ENCODE measurements at regions of chr9 and their contacts with region 1.

Region 1: GRCh38 chr9:111037381-111038305 is 627 bp downstream of the LPAR1 start:
- DNase-seq: no peak
- ATAC-seq: peak; percentile 62
- H3K4me3 ChIP-seq: peak overlapping the region; percentile 53; the same call in 1 of the 2 replicates
- H3K27ac ChIP-seq: no peak overlapping the region
- H3K4me1 ChIP-seq: no peaks in the 10 kb centered on the region
- H3K27me3 ChIP-seq: peaks cover 0 to 10% of the 10 kb centered on the region in 2 experiments; a peak in 1 of 4 replicates
- CTCF ChIP-seq: peak in 2 of 3 experiments; percentile 40 to 54; a peak in 3 of 6 replicates
- EP300 ChIP-seq: no peak
- POLR2A ChIP-seq: no peak
- RAD21 ChIP-seq: peak; percentile 65

Region 2: GRCh38 chr9:110874963-110875674 is 162.5 kb before region 1 on chr9:
- CTCF ChIA-PET with region 1: interaction called, 5 read pairs
- POLR2A ChIA-PET with region 1: no interaction called
- RAD21 ChIA-PET with region 1: interaction called, 7 read pairs
- SMC1A ChIA-PET with region 1: interaction called, 19 read pairs
- in situ Hi-C with region 1: no loop called
- intact Hi-C with region 1: loop called (anchors 5 kb)
- DNase-seq: peak; percentile 48
- ATAC-seq: peak; percentile 95
- H3K4me3 ChIP-seq: no peak overlapping the region
- H3K27ac ChIP-seq: no peak overlapping the region
- H3K4me1 ChIP-seq: peaks cover 4% of the 10 kb centered on the region; the same call in 1 of the 2 replicates
- H3K27me3 ChIP-seq: no peaks in the 10 kb centered on the region
- CTCF ChIP-seq: peak; percentile 39 to 59 (median 40); a peak in 5 of 6 replicates
- EP300 ChIP-seq: 0 out of 4 replicates have a peak, but pooled peaks of 1 of the 2 experiments have one; percentile 48
- POLR2A ChIP-seq: no peak
- RAD21 ChIP-seq: peak; percentile 79

Region 3: GRCh38 chr9:110977259-110977709 is 60.4 kb before region 1 on chr9:
- CTCF ChIA-PET with region 1: interaction called, 4 read pairs
- POLR2A ChIA-PET with region 1: interaction called, 3 read pairs
- RAD21 ChIA-PET with region 1: interaction called, 9 read pairs
- SMC1A ChIA-PET with region 1: interaction called, 12 read pairs
- in situ Hi-C with region 1: no loop called
- intact Hi-C with region 1: no loop called
- DNase-seq: no peak
- ATAC-seq: peak; percentile 29
- H3K4me3 ChIP-seq: no peak overlapping the region
- H3K27ac ChIP-seq: no peak overlapping the region
- H3K4me1 ChIP-seq: no peaks in the 10 kb centered on the region
- H3K27me3 ChIP-seq: no peaks in the 10 kb centered on the region
- CTCF ChIP-seq: no peak
- EP300 ChIP-seq: no peak
- POLR2A ChIP-seq: no peak
- RAD21 ChIP-seq: no peak

Region 4: DNA sequence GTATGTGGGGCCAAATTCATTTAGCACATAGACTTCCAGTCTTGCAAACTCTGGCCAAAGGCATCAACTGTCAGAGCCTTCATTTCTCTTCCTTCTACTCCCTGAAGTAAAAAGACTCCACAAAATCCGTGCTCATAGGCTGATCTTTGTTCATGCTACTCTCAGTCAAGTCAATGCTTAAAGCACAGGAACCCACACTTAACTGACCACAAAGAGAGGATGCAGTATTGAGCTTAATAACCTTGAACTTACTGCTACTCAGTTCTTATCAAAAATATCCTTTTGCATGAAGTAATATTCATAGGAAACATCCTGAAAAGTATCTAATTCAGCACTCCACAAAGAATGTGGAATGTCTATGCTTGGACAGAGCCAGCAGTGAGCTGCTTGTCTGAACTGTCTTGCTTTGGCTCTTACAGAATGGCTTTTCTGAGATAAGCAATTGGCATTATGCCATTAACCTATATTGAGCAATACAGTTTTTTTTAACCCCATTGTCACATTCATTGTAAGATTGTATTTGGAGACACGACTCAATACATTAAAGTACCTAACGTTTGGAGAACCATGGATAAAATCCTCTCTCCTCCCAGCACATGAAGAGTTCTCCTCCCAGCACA is 21.1 kb before region 1 on chr9:
- CTCF ChIA-PET with region 1: interaction called, 28 read pairs
- POLR2A ChIA-PET with region 1: interaction called, 4 read pairs
- RAD21 ChIA-PET with region 1: interaction called, 22 read pairs
- SMC1A ChIA-PET with region 1: interaction called, 218 read pairs
- in situ Hi-C with region 1: no loop called
- intact Hi-C with region 1: no loop called
- DNase-seq: no peak
- ATAC-seq: peak; percentile 64
- H3K4me3 ChIP-seq: no peak overlapping the region
- H3K27ac ChIP-seq: no peak overlapping the region
- H3K4me1 ChIP-seq: no peaks in the 10 kb centered on the region
- H3K27me3 ChIP-seq: no peaks in the 10 kb centered on the region
- CTCF ChIP-seq: no peak
- EP300 ChIP-seq: no peak
- POLR2A ChIP-seq: no peak
- RAD21 ChIP-seq: no peak

Region 5: GRCh38 chr9:111078391-111079038 is 40.9 kb after region 1 on chr9:
- CTCF ChIA-PET with region 1: interaction called, 4 read pairs
- POLR2A ChIA-PET with region 1: interaction called, 4 read pairs
- RAD21 ChIA-PET with region 1: interaction called, 36 read pairs
- SMC1A ChIA-PET with region 1: interaction called, 18 read pairs
- in situ Hi-C with region 1: no loop called
- intact Hi-C with region 1: loop called (anchors 1 kb)
- DNase-seq: peak; percentile 60
- ATAC-seq: peak; percentile 83
- H3K4me3 ChIP-seq: no peak overlapping the region
- H3K27ac ChIP-seq: peak overlapping the region; percentile 50
- H3K4me1 ChIP-seq: no peaks in the 10 kb centered on the region
- H3K27me3 ChIP-seq: no peaks in the 10 kb centered on the region
- CTCF ChIP-seq: no peak
- EP300 ChIP-seq: peak; percentile 25 to 43; a peak in 2 of 4 replicates
- POLR2A ChIP-seq: no peak
- RAD21 ChIP-seq: no peak

Region 6: DNA sequence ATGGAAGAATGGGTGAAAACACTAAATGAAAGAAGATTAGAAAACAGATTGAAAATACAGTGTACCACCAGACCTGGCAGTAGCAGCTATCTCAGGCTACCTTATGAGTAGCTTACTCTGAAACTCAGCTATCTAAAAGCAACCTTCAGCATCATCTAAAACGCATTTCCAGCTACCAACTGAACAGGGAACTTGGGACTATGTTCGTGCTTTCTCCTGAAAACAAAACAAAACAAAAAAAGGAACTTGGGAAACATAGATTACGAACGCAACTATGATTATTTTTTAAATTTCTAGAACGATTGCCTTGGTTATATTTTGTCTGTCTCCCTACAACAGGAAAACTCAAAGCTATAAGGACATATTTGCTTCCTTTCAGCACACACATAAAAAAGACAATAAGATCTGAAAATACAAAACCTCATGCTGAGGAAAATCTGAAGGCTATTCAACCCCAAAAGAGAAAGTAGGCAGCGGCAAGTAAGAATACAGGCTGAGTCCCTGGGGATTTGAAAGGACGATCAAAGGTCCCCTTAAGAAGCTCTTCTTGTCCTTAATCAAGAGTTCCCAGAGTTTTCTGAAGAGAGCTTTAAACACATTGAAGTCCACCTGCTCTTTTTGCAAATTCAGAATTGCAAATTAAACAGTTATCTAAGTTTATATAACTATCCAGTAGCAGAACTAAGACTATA is 238.9 kb after region 1 on chr9:
- CTCF ChIA-PET with region 1: interaction called, 6 read pairs
- POLR2A ChIA-PET with region 1: interaction called, 6 read pairs
- RAD21 ChIA-PET with region 1: interaction called, 10 read pairs
- SMC1A ChIA-PET with region 1: interaction called, 6 read pairs
- in situ Hi-C with region 1: no loop called
- intact Hi-C with region 1: no loop called
- DNase-seq: no peak
- ATAC-seq: peak; percentile 67
- H3K4me3 ChIP-seq: no peak overlapping the region; the same call in 1 of the 2 replicates
- H3K27ac ChIP-seq: no peak overlapping the region
- H3K4me1 ChIP-seq: no peaks in the 10 kb centered on the region
- H3K27me3 ChIP-seq: no peaks in the 10 kb centered on the region
- CTCF ChIP-seq: no peak
- EP300 ChIP-seq: no peak
- POLR2A ChIP-seq: no peak
- RAD21 ChIP-seq: no peak

Measured in GM12878 (cell line).